Activated T-helper 1 cell treated with anti-CD3 and anti-CD28 coated beads, Interleukin-12 subunit alpha, Interleukin-12 subunit beta, Interleukin-2, Interleukin-4 antibody, amounts not matched to agents 30 ng/mL and 10 ng/mL and 1 ng/mL, durations not matched to agents 14 hours and 24 hours and 36 hours (primary cell): ENCODE measurements at regions of chr7 and their contacts with region 1.

Region 1: DNA sequence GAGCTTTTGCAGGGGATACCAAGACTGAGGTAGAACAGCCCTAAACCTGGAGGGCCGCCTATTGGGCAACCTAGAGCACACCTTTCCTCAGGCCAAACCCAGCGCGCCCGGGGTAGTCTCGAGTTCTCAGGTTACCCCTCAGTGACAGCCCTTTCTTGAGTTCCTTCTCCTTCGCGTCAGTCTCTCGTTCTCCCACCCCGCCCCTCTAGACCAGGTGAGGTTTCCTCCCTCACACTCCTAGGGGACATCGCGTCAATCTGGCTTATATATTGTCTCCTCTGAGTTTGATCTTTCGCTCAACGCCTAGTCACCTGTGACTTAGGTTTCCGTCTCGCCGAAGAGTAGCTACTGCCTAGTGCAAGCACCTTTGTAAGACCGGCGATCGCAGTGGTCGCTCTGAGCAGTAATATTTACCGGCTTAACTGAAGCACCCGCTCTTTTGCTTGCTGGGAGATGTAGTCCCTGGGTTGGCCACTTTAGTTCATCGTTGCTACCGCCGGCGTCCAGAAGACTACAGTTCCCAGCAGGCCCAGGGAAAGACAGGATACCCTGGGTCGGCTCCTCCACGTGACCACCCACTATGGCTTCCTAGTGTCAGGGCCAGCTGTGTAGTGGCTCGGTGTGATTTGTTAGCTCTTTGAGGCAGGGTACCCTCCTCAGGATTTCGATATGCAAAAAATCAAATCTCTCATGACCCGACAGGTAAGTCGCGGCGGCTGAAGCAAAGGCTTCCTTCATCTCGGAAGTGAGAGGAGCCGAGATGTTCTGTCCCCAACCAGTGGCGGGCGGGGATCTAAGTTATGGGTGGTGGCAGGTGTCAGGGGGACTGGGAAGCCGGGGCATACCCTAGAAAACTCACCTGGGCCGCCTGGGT is at the start of gene VPS50:
- DNase-seq: peak; percentile 91
- H3K4me3 Mint-ChIP-seq: peak within 1 kb of the TSS; percentile 98
- H3K27ac Mint-ChIP-seq: peak within 1 kb of the TSS; percentile 93
- H3K4me1 Mint-ChIP-seq: peaks cover 18% of the 10 kb centered on the region
- H3K27me3 Mint-ChIP-seq: peaks cover 7% of the 10 kb centered on the region
- total RNA-seq, gene VPS50: 16.7 and 17.0 TPM in 2 replicates

Region 2: DNA sequence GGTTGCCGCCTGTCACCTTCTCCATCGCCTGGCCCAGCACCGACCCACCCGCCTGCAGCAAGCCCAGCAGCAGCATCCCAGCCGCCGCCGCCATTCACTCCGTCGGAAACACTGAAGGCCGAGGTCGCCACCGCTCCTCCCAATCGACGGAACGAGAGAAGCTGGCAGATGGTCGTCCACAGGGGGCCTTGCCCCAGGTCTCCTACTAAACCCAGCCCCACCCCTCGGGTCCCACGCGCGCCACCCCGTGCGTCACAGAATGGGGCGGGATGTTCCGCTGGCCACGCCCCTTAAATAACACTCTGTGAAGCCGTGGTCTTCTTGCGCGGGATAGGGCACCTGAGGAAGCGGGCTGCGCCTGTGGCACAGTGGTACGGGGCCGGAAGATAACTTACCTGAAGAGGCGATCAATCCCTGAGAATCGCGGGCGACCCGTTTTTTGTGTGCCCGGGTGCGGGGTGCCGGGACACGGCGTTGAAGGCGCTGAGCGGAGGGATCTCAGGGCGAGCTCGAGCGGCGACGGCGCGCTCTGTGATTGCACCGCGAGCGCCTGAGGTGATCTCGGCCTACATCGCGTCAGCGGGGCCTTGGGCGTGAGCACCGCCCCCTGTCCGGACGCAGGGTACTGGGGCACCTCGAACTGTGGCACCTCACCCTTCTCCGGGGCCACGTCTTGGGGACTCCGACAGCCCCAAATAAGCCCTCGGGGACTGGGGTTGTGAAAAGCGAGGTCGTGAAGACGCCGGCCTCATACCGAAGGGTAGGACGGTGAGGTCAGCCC is 1097.6 kb before region 1 on chr7 and contains the start of gene CYP51A1:
- intact Hi-C with region 1: loop called (anchors 1 kb)
- DNase-seq: peak; percentile 92
- H3K4me3 Mint-ChIP-seq: peak within 1 kb of the TSS; percentile 98
- H3K27ac Mint-ChIP-seq: peak within 1 kb of the TSS; percentile 97
- H3K4me1 Mint-ChIP-seq: peaks cover 44% of the 10 kb centered on the region
- H3K27me3 Mint-ChIP-seq: no peaks in the 10 kb centered on the region
- total RNA-seq, gene CYP51A1: 96.9 and 102 TPM in 2 replicates

Region 3: GRCh38 chr7:92590711-92591310 is 641.2 kb before region 1 on chr7:
- intact Hi-C with region 1: loop called (anchors 1 kb)
- DNase-seq: no peak
- H3K4me3 Mint-ChIP-seq: peak overlapping the region; percentile 92
- H3K27ac Mint-ChIP-seq: no peak overlapping the region
- H3K4me1 Mint-ChIP-seq: peaks cover 37% of the 10 kb centered on the region
- H3K27me3 Mint-ChIP-seq: peaks cover 5% of the 10 kb centered on the region

Region 4: GRCh38 chr7:93092757-93093370 is 139.2 kb before region 1 on chr7:
- intact Hi-C with region 1: loop called (anchors 1 kb)
- DNase-seq: no peak
- H3K4me3 Mint-ChIP-seq: no peak overlapping the region
- H3K27ac Mint-ChIP-seq: no peak overlapping the region
- H3K4me1 Mint-ChIP-seq: no peaks in the 10 kb centered on the region
- H3K27me3 Mint-ChIP-seq: peaks cover 29% of the 10 kb centered on the region

Region 5: DNA sequence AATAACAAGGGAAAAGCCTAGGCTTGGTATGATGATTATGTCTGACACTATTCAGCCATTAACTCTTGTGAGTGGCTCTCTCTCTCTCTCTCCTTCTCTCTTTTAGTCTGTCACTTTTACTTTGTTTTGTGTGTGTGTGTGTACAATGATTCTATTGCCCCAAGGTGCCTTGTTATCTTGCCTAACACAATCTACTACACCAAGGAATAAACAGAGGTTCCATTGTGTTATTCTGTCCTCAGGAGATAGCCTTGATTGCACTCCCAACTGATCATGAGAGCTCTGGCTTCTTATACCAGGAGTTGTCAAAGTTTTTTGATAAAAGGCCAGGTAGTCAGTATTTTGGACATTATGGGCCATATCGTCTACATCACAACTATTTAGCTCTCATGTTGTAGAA is 465.9 kb after region 1 on chr7:
- intact Hi-C with region 1: no loop called
- DNase-seq: no peak
- H3K4me3 Mint-ChIP-seq: no peak overlapping the region
- H3K27ac Mint-ChIP-seq: no peak overlapping the region
- H3K4me1 Mint-ChIP-seq: no peaks in the 10 kb centered on the region
- H3K27me3 Mint-ChIP-seq: no peaks in the 10 kb centered on the region

Region 6: GRCh38 chr7:94004024-94004951 is 772.3 kb after region 1 on chr7 and contains the start of gene BET1:
- intact Hi-C with region 1: loop called (anchors 1 kb)
- DNase-seq: peak; percentile 88
- H3K4me3 Mint-ChIP-seq: peak within 1 kb of the TSS; percentile 97
- H3K27ac Mint-ChIP-seq: peak within 1 kb of the TSS; percentile 97
- H3K4me1 Mint-ChIP-seq: peaks cover 35% of the 10 kb centered on the region
- H3K27me3 Mint-ChIP-seq: peaks cover 4% of the 10 kb centered on the region
- total RNA-seq, gene BET1: 21.4 and 21.6 TPM in 2 replicates

Region 7: GRCh38 chr7:94657771-94658693 is 1426.0 kb after region 1 on chr7:
- intact Hi-C with region 1: loop called (anchors 5 kb)
- DNase-seq: peak; percentile 86
- H3K4me3 Mint-ChIP-seq: peak overlapping the region; percentile 83
- H3K27ac Mint-ChIP-seq: no peak overlapping the region
- H3K4me1 Mint-ChIP-seq: peaks cover 19% of the 10 kb centered on the region
- H3K27me3 Mint-ChIP-seq: peaks cover 26% of the 10 kb centered on the region